Calu3 (cell line): ENCODE measurements at regions of chr14 and their contacts with region 1.

Region 1: DNA sequence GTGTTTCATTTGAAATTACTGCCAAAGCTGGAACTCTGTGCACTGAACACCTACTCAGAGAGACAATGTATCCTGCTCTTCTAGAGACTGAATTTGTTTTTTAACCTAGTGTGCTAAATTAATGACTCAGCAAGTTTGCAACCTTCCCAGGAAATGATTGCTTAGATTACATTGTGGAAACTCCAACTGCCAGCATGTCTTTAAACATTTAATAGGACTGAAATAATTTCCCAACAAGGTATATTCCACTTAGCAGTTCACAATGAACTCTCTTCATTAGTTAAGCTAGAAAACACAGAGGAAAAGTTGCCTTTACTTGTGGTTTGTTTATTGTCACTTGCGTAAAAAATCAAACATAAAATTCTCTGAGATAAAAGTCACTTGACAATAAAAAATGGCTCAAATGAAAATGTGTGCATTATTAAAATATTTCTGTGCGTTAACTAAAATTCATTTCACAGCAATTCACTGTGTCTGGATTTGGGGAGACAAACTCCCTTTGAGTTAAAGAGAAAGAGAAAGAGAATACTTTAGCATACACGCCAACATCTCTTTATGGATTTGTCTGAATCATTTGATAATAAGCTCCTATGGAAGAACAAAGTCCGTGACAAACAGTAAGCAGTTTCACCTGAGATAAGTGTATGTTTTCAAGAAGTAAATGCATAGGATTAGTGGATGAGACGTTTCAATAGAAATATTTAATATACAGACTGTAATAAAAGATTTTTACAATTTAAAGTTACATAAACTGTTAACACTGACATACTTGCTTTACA is 284.0 kb downstream of the PRKD1 start:
- DNase-seq: no peak
- H3K4me3 Mint-ChIP-seq: no peak overlapping the region
- H3K27ac Mint-ChIP-seq: no peak overlapping the region
- H3K4me1 Mint-ChIP-seq: peaks cover 32% of the 10 kb centered on the region
- H3K27me3 Mint-ChIP-seq: no peaks in the 10 kb centered on the region
- CTCF ChIP-seq: no peak

Region 2: GRCh38 chr14:29607169-29607568 is 36.5 kb before region 1 on chr14:
- CTCF ChIA-PET with region 1: no interaction called
- intact Hi-C with region 1: loop called (anchors 5 kb)
- DNase-seq: no peak
- H3K4me3 Mint-ChIP-seq: no peak overlapping the region
- H3K27ac Mint-ChIP-seq: no peak overlapping the region
- H3K4me1 Mint-ChIP-seq: peaks cover 12% of the 10 kb centered on the region
- H3K27me3 Mint-ChIP-seq: no peaks in the 10 kb centered on the region
- CTCF ChIP-seq: no peak

Region 3: DNA sequence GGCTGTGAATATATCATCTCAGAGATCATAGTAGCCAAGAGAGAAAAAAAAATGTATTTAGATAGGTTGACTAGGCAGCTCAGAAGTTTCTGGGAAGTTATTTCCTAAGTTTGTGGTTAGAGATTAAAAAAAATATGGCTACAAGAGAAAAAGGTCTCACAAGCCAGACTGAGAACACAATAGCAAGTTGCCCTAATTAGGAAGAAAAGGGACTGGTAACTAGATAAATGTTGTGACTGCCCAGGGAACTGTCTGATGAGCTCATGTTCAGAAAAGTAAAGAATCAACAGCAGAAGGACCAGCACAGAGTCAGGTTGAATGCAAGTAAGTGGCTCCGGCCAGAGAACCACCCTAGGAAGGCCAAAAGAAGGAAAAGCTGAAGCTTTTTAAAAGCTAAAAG is 27.4 kb after region 1 on chr14:
- CTCF ChIA-PET with region 1: no interaction called
- intact Hi-C with region 1: no loop called
- DNase-seq: no peak
- H3K4me3 Mint-ChIP-seq: no peak overlapping the region
- H3K27ac Mint-ChIP-seq: no peak overlapping the region
- H3K4me1 Mint-ChIP-seq: no peaks in the 10 kb centered on the region
- H3K27me3 Mint-ChIP-seq: no peaks in the 10 kb centered on the region
- CTCF ChIP-seq: no peak

Region 4: GRCh38 chr14:29906256-29906898 is 262.8 kb after region 1 on chr14:
- CTCF ChIA-PET with region 1: no interaction called
- intact Hi-C with region 1: loop called (anchors 10 kb)
- DNase-seq: peak; percentile 57
- H3K4me3 Mint-ChIP-seq: peak overlapping the region; percentile 28
- H3K27ac Mint-ChIP-seq: peak overlapping the region; percentile 82
- H3K4me1 Mint-ChIP-seq: peaks cover 25% of the 10 kb centered on the region
- H3K27me3 Mint-ChIP-seq: no peaks in the 10 kb centered on the region
- CTCF ChIP-seq: no peak

Region 5: DNA sequence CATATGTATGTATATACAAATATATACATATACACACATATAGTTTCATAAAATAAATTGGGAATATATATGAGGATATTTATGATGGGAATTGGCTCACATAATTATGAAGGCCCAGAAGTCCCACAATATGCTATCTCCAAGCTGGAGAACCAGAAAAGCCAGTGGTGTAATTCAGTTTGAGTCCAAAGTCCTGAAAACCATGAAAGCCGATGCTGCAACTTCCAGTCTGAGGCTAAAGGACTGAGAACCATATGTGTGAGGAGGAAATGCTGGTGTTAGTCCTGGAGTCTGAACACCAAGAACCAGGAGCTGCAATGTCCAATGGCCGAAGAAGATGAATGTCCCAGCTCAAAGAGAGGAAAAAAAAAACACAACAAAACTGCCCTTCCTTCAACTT is 349.5 kb after region 1 on chr14:
- CTCF ChIA-PET with region 1: no interaction called
- intact Hi-C with region 1: no loop called
- DNase-seq: peak; percentile 6
- H3K4me3 Mint-ChIP-seq: no peak overlapping the region
- H3K27ac Mint-ChIP-seq: no peak overlapping the region
- H3K4me1 Mint-ChIP-seq: peaks cover 7% of the 10 kb centered on the region
- H3K27me3 Mint-ChIP-seq: no peaks in the 10 kb centered on the region
- CTCF ChIP-seq: no peak